ENCODE measurements at regions of chr22 and their contacts with region 1.

Region 1: DNA sequence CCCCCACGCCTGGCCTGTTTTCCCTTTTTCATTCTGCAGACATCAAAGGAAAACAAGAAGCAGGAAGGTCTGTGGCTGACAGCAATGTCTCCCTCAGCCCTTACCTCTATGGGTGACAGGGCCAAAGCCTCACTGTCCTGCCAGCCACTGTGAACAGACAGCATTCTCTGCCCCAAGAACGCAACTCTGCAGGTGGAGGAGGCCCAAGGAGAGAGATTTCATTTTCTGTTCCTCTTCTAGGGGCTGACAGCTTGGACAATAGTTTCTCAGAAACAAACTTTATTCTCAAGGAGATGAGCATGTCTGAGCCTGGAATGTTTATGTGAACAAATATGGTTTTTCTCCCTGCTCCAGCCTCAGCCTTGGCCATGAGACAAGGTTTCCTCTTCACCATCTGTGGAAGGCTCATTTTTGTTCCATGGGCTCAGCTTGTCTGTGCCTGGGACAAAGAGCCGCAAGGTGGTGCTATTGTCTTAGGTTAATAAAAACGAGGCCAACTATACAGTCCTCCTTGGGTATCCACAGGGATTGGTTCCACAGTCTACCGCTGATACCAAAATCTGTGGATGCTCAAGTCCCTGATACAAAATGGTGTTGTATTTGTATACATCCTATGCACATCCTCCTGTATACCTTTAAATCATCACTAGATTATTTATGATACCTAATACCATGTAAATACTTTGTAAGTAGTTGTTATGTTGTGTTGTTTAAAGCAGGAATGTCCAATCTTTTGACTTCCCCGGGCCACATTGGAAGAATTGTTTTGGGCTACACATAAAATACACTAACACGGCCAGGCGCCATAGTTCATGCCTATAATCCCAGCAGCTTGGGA is 5.8 kb downstream of the PIWIL3 start:
- DNase-seq: peak in 4 of 5 donors; percentile 22 to 49 (median 31)
- H3K4me3 ChIP-seq: no peak overlapping the region
- H3K4me3 Mint-ChIP-seq: no peak overlapping the region
- H3K27ac ChIP-seq: no peak overlapping the region
- H3K27ac Mint-ChIP-seq: no peak overlapping the region
- H3K4me1 ChIP-seq: no peaks in the 10 kb centered on the region
- H3K4me1 Mint-ChIP-seq: no peaks in the 10 kb centered on the region
- H3K27me3 ChIP-seq: peaks cover 4% of the 10 kb centered on the region
- H3K27me3 Mint-ChIP-seq: peaks cover 8 to 18% of the 10 kb centered on the region in 2 donors

Region 2: GRCh38 chr22:24697621-24698082 is 71.1 kb before region 1 on chr22:
- CTCF ChIA-PET with region 1: no interaction called
- POLR2A ChIA-PET with region 1: no interaction called
- intact Hi-C with region 1: no loop called
- DNase-seq: no peak
- H3K4me3 ChIP-seq: no peak overlapping the region
- H3K4me3 Mint-ChIP-seq: no peak overlapping the region
- H3K27ac ChIP-seq: no peak overlapping the region
- H3K27ac Mint-ChIP-seq: no peak overlapping the region
- H3K4me1 ChIP-seq: no peaks in the 10 kb centered on the region
- H3K4me1 Mint-ChIP-seq: no peaks in the 10 kb centered on the region
- H3K27me3 ChIP-seq: no peaks in the 10 kb centered on the region
- H3K27me3 Mint-ChIP-seq: peaks cover 1 to 4% of the 10 kb centered on the region in 2 donors

Region 3: GRCh38 chr22:24758164-24758799 is 10.5 kb before region 1 on chr22:
- CTCF ChIA-PET with region 1: interaction called, 44 read pairs
- POLR2A ChIA-PET with region 1: no interaction called
- intact Hi-C with region 1: no loop called
- DNase-seq: peak; percentile 41 to 49 (median 46)
- H3K4me3 ChIP-seq: no peak overlapping the region
- H3K4me3 Mint-ChIP-seq: no peak overlapping the region
- H3K27ac ChIP-seq: no peak overlapping the region
- H3K27ac Mint-ChIP-seq: no peak overlapping the region
- H3K4me1 ChIP-seq: no peaks in the 10 kb centered on the region
- H3K4me1 Mint-ChIP-seq: no peaks in the 10 kb centered on the region
- H3K27me3 ChIP-seq: no peaks in the 10 kb centered on the region
- H3K27me3 Mint-ChIP-seq: peaks cover 0 to 7% of the 10 kb centered on the region in 2 donors

Region 4: GRCh38 chr22:24805790-24806662 is 37.3 kb after region 1 on chr22 and contains the start of gene SGSM1:
- CTCF ChIA-PET with region 1: interaction called, 17 read pairs
- POLR2A ChIA-PET with region 1: no interaction called
- intact Hi-C with region 1: no loop called
- DNase-seq: peak; percentile 72 to 80 (median 76)
- H3K4me3 ChIP-seq: peak within 1 kb of the TSS; percentile 36 to 54
- H3K4me3 Mint-ChIP-seq: peak within 1 kb of the TSS; percentile 78 to 85 (median 82)
- H3K27ac ChIP-seq: peak within 1 kb of the TSS; percentile 55
- H3K27ac Mint-ChIP-seq: peak within 1 kb of the TSS; percentile 52 to 93 (median 82)
- H3K4me1 ChIP-seq: peaks cover 19% of the 10 kb centered on the region
- H3K4me1 Mint-ChIP-seq: peaks cover 24 to 38% (median 31%) of the 10 kb centered on the region in 4 donors
- H3K27me3 ChIP-seq: no peaks in the 10 kb centered on the region
- H3K27me3 Mint-ChIP-seq: no peaks in the 10 kb centered on the region
- total RNA-seq, gene SGSM1: 3.2 to 3.4 TPM

Region 5: DNA sequence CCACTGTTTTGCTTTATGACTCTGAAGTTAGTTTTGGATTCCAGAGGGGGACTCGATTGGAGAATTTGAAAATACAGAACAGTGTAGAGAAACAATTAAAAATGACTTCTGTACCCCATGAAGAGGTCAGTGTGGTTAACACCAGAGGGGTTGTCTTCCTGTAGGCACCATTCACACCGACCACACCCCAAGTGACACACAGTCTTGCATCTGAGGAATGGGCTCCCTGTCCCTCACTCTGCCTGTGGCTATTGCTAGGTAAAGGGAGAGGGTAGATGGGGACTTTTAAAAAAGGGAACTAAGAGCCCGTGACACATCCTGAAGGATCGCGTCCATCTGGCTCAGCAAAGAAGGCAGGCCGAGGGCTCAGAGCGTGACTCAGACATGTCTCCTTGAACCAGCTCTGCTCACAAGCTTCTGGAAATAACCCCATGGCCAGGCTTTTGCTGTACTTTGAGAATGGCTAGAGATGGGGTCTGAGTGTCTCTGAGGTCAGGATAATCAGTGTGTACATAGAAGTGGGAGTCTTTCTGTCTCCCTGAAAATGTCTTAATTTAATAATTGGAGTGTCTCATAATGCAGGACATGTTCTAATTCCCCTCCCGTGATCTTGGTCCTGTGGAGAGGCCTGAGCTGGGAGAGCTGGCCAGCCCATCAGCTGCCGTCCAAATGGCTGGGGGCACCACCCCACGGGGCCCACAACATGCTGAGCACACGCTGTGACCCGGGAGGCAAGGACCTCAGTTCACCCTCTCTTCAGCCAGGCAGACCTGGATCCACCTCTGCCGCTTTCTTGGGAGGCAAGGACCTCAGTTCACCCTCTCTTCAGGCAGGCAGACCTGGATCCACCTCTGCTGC is 76.5 kb after region 1 on chr22:
- CTCF ChIA-PET with region 1: interaction called, 105 read pairs
- POLR2A ChIA-PET with region 1: no interaction called
- intact Hi-C with region 1: loop called (anchors 1 kb)
- DNase-seq: no peak
- H3K4me3 ChIP-seq: no peak overlapping the region
- H3K4me3 Mint-ChIP-seq: peak overlapping the region in 2 of 8 donors; percentile 6 to 34
- H3K27ac ChIP-seq: no peak overlapping the region
- H3K27ac Mint-ChIP-seq: peak overlapping the region in 1 of 7 donors; percentile 32
- H3K4me1 ChIP-seq: no peaks in the 10 kb centered on the region
- H3K4me1 Mint-ChIP-seq: peaks cover 3 to 19% (median 14%) of the 10 kb centered on the region in 4 donors
- H3K27me3 ChIP-seq: no peaks in the 10 kb centered on the region
- H3K27me3 Mint-ChIP-seq: no peaks in the 10 kb centered on the region

Region 6: GRCh38 chr22:24926849-24927579 is 158.3 kb after region 1 on chr22:
- CTCF ChIA-PET with region 1: no interaction called
- POLR2A ChIA-PET with region 1: no interaction called
- intact Hi-C with region 1: no loop called
- DNase-seq: no peak
- H3K4me3 ChIP-seq: no peak overlapping the region
- H3K4me3 Mint-ChIP-seq: no peak overlapping the region
- H3K27ac ChIP-seq: no peak overlapping the region
- H3K27ac Mint-ChIP-seq: no peak overlapping the region
- H3K4me1 ChIP-seq: no peaks in the 10 kb centered on the region
- H3K4me1 Mint-ChIP-seq: no peaks in the 10 kb centered on the region
- H3K27me3 ChIP-seq: no peaks in the 10 kb centered on the region
- H3K27me3 Mint-ChIP-seq: peaks cover 5 to 7% of the 10 kb centered on the region in 2 donors

Region 7: DNA sequence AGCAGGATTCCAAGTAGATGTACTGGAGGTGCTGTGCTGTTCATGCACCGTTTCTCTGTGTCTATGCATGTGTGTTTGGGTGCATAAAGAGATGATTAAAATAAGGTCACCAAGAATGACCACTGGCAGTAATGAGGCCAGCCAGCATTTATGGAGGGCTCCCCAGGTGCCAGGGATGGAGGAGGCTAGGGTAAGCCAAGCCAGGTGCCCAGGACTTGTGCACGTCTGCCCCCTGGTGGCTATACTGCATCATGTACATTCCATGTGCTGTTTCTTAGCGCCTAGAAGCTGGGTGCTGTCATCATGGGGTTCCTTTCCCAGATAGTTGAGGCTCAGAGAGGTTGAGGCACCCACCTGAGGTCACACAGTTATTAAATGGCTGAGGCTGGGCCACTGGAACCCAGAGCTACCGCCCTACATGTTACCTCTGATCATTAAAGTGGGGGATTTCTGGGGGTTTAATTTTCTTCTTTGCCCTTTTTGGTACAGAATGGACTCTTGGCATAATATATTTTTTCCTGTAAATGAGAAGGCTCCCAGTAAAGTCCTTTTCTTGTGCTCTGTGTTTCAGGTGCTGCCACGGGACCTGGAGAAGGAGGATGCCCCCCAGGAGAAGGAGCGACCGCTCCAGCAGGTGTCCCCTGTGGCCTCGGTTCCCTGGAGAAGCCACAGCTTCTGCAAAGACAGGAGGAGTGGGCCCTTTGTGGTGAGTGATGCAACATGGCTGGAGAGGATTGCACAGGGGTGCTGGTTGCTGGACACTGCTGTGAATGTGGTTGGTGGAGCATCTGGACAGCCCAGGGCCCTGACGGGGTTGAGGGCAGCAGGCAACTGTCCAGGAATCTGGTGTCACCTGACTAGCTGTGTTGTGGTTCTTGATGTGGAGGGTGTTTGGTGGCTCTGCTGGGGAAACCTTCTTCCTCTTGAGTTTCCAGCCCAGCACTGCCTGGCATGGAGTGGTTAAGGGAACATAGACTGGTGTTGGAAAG is 280.2 kb after region 1 on chr22:
- CTCF ChIA-PET with region 1: interaction called, 8 read pairs
- POLR2A ChIA-PET with region 1: no interaction called
- intact Hi-C with region 1: loop called (anchors 5 kb)
- DNase-seq: peak; percentile 49 to 68 (median 65)
- H3K4me3 ChIP-seq: no peak overlapping the region
- H3K4me3 Mint-ChIP-seq: no peak overlapping the region
- H3K27ac ChIP-seq: no peak overlapping the region
- H3K27ac Mint-ChIP-seq: peak overlapping the region in 1 of 7 donors; percentile 52
- H3K4me1 ChIP-seq: no peaks in the 10 kb centered on the region
- H3K4me1 Mint-ChIP-seq: no peaks in the 10 kb centered on the region
- H3K27me3 ChIP-seq: no peaks in the 10 kb centered on the region
- H3K27me3 Mint-ChIP-seq: peaks cover 2 to 3% of the 10 kb centered on the region in 2 donors

Measured in CD4-positive, alpha-beta memory T cell (primary cell).